PC-3 (cell line): ENCODE measurements at regions of chr4 and their contacts with region 1.

Region 1: DNA sequence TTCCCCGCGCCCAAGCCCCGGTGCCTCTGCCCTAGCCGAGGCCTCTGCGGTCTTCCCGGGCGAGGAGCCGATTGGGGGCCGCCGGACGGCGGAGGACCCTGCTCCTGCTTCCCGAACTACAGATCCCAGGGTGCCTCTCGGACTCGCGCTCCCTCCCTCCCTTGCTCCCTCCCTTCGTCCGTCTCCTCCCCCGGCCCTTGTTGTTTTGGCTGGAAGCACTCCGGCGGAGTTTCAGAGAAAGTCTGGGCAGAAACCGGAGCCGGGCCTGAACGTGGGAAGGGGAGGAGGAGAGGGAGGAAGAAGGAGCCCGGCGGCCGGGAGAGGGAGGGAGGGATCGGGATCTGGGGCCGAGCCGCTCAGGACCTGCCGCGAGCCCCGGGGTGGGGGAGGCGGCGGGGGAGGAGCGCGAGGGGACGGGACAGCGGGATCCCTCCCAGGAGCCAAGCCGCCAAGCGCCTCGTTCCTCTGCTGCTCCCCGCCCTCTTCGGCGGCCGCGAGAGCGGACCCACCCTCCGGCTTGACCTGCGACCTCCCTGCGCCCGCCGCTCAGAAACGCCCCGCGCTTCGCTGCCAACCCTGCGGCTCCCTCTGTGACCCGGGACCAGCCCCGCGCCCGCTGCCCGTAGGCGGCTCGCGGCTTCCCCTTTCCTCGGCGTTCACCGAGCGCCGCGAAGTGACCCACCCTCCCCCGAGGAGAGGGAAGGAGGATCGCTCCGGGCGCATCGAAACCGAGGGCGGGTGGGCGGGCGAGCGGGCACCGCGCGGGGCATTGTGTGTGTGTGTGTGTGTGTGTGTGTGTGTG is 496 bp upstream of the GAB1 start:
- DNase-seq: peak; percentile 74
- ATAC-seq: peak; percentile 74
- H3K4me3 ChIP-seq: peak overlapping the region; percentile 73
- H3K27ac ChIP-seq: peak overlapping the region; percentile 50
- H3K4me1 ChIP-seq: peaks cover 14% of the 10 kb centered on the region
- H3K27me3 ChIP-seq: no peaks in the 10 kb centered on the region
- CTCF ChIP-seq: no peak

Region 2: DNA sequence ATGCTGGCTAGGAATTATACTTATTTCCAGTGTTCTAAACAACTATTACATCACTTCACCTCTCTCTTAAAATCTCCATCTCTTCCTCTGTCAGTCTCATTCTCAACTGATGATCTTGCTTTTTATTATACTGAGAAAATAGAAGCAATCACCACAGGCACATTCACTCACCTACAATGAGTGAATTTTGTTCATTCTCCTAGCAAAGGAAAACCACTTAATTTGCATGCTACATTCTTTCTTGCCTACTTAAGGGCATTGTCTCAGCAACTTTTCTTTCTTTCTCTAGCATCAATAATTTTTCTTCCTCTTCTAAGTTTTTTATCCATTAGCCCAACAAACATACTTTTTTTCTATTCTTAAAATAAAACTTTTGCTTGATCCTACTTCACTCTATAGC is 172.6 kb before region 1 on chr4:
- CTCF ChIA-PET with region 1: no interaction called
- POLR2A ChIA-PET with region 1: no interaction called
- intact Hi-C with region 1: no loop called
- DNase-seq: no peak
- ATAC-seq: no peak
- H3K4me3 ChIP-seq: no peak overlapping the region
- H3K27ac ChIP-seq: no peak overlapping the region
- H3K4me1 ChIP-seq: no peaks in the 10 kb centered on the region
- H3K27me3 ChIP-seq: no peaks in the 10 kb centered on the region
- CTCF ChIP-seq: no peak

Region 3: GRCh38 chr4:143184217-143185116 is 151.7 kb before region 1 on chr4 and contains the start of gene USP38:
- CTCF ChIA-PET with region 1: no interaction called
- POLR2A ChIA-PET with region 1: no interaction called
- intact Hi-C with region 1: loop called (anchors 5 kb)
- DNase-seq: peak; percentile 98
- ATAC-seq: peak; percentile 82
- H3K4me3 ChIP-seq: peak within 1 kb of the TSS; percentile 94
- H3K27ac ChIP-seq: peak within 1 kb of the TSS; percentile 86
- H3K4me1 ChIP-seq: peaks cover 28% of the 10 kb centered on the region
- H3K27me3 ChIP-seq: no peaks in the 10 kb centered on the region
- CTCF ChIP-seq: no peak; the same call in 1 of the 2 replicates
- total RNA-seq, gene USP38: 21.5 and 24.5 TPM in 2 replicates

Region 4: DNA sequence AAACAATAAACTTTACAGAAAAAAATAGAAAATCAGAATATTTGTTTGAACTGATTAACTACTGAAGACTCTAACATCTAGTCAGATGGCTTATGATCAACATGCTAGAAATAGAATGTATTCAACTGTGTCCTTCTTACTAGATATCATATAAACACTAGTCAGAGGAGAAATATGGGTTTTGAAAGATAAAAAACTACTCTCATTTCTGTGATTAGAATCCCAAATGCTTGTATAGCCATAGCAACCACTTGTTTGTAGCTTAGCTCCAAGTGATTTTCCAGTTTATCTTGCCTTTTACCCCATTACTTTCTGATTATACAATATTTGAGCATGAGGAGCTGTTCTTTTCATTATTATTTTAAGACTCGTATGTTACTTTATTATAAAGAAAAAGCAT is 120.3 kb before region 1 on chr4:
- CTCF ChIA-PET with region 1: no interaction called
- POLR2A ChIA-PET with region 1: no interaction called
- intact Hi-C with region 1: loop called (anchors 2 kb)
- DNase-seq: no peak
- ATAC-seq: no peak
- H3K4me3 ChIP-seq: no peak overlapping the region
- H3K27ac ChIP-seq: no peak overlapping the region
- H3K4me1 ChIP-seq: peaks cover 9% of the 10 kb centered on the region; the same call in 1 of the 2 replicates
- H3K27me3 ChIP-seq: no peaks in the 10 kb centered on the region
- CTCF ChIP-seq: no peak

Region 5: DNA sequence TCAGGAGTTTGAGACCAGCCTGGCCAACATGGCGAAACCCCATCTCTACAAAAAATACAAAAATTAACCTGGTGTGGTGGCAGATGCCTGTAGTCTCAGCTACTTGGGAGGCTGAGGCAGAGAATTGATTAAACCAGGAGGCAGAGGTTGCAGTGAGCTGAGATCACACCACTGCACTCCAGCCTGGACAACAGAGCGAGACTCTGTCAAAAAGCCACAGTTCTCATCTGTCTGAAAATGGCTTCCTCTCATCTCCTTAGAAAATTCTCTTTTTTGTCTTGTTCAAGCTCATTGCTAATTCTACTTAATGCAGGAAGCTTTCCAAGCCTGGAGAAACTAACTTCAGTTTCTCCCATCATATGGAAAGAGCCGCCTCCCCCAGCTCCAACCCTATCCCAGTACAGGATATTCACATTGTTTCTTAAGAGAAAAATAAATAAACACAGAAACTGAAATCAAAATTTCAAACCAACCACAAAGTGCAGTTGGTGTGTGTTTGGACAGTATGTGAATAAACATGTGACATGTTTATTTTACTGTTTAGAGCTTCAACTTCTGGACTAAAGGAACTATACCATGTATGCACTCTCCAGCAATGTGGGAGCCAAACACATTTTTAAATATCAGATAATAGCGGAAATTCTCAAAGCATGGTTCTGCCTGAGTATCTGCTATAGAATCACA is 54.5 kb before region 1 on chr4:
- CTCF ChIA-PET with region 1: no interaction called
- POLR2A ChIA-PET with region 1: no interaction called
- intact Hi-C with region 1: no loop called
- DNase-seq: no peak
- ATAC-seq: no peak
- H3K4me3 ChIP-seq: no peak overlapping the region
- H3K27ac ChIP-seq: no peak overlapping the region
- H3K4me1 ChIP-seq: no peaks in the 10 kb centered on the region
- H3K27me3 ChIP-seq: no peaks in the 10 kb centered on the region
- CTCF ChIP-seq: no peak

Region 6: DNA sequence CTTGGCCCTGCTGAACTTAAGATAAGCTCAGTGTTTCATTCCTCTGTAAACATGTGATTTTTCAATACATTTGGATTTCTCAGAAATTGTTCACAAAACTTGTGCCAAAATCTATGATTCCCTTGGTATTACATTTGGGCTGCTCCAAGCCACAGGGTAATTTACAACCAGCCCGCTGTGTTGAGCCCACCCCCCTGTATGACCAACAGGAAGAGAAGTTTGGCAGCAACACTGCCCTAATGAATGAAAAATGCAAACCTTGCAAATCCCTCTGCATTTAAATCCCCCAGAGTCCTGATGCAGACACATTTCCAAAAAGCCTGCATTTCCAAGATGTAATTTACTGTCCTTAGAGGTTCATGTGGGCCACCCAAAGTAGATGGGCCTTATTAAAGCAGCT is 33.6 kb before region 1 on chr4:
- CTCF ChIA-PET with region 1: no interaction called
- POLR2A ChIA-PET with region 1: no interaction called
- intact Hi-C with region 1: no loop called
- DNase-seq: peak; percentile 14
- ATAC-seq: peak; percentile 64
- H3K4me3 ChIP-seq: no peak overlapping the region
- H3K27ac ChIP-seq: no peak overlapping the region
- H3K4me1 ChIP-seq: no peaks in the 10 kb centered on the region
- H3K27me3 ChIP-seq: no peaks in the 10 kb centered on the region
- CTCF ChIP-seq: no peak

Region 7: DNA sequence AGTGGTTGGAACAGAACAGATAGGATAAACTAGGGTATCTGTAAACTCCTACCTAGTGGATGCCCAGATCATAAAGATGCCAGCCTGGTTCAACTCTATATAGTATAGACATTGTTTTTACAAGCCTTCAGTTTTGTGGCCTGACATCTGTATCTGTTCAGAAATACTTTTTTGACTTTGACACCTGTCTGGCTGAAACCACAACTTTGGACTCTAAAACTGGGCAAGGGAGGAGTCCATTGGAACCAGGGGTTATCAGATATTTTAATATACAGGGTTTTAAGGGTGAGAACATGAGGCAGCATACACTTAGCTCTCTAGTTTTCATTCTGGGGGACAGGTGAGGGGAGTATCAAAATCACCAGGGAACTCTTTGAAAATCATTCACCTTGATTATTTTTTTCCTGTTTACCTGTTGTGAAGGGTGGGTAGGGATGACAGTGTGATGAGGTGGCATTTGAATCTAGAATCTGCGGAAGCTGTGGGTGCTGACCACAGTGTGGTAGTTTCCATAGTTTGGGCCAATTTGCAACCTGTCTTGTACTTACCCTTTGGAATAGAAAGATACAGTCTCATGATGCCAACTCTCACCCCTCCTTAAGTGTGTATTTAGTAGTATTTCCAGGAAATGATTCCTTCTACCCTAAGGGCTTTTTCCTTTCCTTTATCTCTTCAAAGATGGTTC is 21.1 kb after region 1 on chr4:
- CTCF ChIA-PET with region 1: interaction called, 3 read pairs
- POLR2A ChIA-PET with region 1: interaction called, 3 read pairs
- intact Hi-C with region 1: loop called (anchors 1 kb)
- DNase-seq: peak; percentile 93
- ATAC-seq: peak; percentile 73
- H3K4me3 ChIP-seq: no peak overlapping the region
- H3K27ac ChIP-seq: peak overlapping the region; percentile 83
- H3K4me1 ChIP-seq: peaks cover 61% of the 10 kb centered on the region
- H3K27me3 ChIP-seq: no peaks in the 10 kb centered on the region
- CTCF ChIP-seq: no peak

Region 8: GRCh38 chr4:143399113-143399949 is 63.2 kb after region 1 on chr4:
- CTCF ChIA-PET with region 1: no interaction called
- POLR2A ChIA-PET with region 1: interaction called, 6 read pairs
- intact Hi-C with region 1: loop called (anchors 2 kb)
- DNase-seq: peak; percentile 75
- ATAC-seq: no peak
- H3K4me3 ChIP-seq: no peak overlapping the region
- H3K27ac ChIP-seq: no peak overlapping the region
- H3K4me1 ChIP-seq: peaks cover 16% of the 10 kb centered on the region
- H3K27me3 ChIP-seq: no peaks in the 10 kb centered on the region
- CTCF ChIP-seq: peak; percentile 92

Region 9: DNA sequence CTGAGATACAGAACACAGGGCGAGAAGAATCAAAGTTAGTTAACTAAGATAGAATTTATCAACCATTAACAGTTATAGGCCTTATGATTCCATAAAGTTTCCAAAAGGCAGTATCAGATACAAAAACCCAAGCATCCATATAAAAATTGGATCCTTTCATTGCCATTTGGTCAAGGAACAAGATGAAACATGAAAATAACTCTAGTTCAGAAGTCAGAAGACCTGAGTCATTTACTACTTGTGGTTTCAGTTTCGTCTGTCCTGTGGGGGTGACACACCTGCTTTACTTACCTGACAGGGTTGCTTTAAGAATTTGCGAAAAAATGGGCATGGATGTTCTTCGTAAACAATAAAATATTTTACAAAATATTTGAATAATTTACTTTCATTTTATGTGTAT is 1631.0 kb after region 1 on chr4:
- CTCF ChIA-PET with region 1: no interaction called
- POLR2A ChIA-PET with region 1: no interaction called
- intact Hi-C with region 1: no loop called
- DNase-seq: peak; percentile 43
- ATAC-seq: no peak
- H3K4me3 ChIP-seq: no peak overlapping the region
- H3K27ac ChIP-seq: no peak overlapping the region
- H3K4me1 ChIP-seq: 0 out of 2 replicates have a peak, but pooled peaks cover 3% of the 10 kb centered on the region
- H3K27me3 ChIP-seq: no peaks in the 10 kb centered on the region
- CTCF ChIP-seq: no peak